Dendritic cell treated with granulocyte-macrophage colony-stimulating factor and Interleukin-4, amounts not matched to agents 40 ng/mL and 50 ng/mL, for 4 days (primary cell): ENCODE measurements at regions of chr17 and their contacts with region 1.

Region 1: DNA sequence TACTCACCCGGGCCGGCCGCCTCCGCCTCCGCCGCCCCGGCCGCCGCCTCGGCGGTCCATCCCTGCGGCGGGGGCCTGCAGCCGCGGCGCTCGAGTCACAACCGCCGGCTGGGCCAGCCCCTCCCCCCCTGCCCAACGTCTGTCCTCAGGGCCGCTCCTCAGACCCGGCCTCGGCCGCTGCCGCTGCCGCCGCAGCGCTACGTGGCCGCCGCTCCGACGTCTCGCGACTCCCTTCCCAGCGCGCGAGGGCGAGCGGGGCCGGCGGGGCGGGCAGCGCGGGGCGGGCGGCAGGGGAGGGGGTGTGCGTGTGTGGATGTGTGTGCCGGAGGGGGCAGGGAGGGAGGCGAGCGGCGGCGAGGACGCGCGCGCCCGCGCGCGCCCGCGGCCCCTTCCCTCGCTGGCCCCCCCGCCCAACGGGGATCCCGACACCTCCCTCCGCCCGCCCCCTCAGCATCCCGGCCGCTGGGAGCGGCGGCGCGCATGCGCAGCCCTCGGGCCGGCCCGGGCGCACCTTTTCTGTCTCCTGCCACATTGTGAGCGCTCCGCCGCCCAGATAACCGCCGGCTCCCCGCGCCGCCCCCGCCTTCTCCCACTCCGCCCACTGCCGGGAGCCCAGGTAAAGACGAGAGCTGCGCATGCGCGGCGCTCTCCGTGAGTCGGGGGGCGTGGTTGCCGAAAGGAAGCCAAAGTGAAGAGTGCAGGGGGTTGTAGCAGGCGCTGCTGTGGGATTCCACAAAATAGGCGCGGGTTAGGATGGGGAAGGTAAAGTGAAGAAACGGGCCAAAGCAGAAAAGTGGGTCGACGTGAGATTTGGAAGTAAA is at the start of gene ZNF652:
- H3K4me3 Mint-ChIP-seq: peak within 1 kb of the TSS; percentile 92
- H3K27ac Mint-ChIP-seq: peak within 1 kb of the TSS; percentile 90
- H3K4me1 Mint-ChIP-seq: peaks cover 54% of the 10 kb centered on the region
- H3K27me3 Mint-ChIP-seq: no peaks in the 10 kb centered on the region

Region 2: GRCh38 chr17:49343273-49343672 is 18.8 kb before region 1 on chr17:
- intact Hi-C with region 1: loop called (anchors 2 kb)
- H3K4me3 Mint-ChIP-seq: peak overlapping the region; percentile 32
- H3K27ac Mint-ChIP-seq: peak overlapping the region; percentile 28
- H3K4me1 Mint-ChIP-seq: peaks cover 48% of the 10 kb centered on the region
- H3K27me3 Mint-ChIP-seq: no peaks in the 10 kb centered on the region

Region 3: DNA sequence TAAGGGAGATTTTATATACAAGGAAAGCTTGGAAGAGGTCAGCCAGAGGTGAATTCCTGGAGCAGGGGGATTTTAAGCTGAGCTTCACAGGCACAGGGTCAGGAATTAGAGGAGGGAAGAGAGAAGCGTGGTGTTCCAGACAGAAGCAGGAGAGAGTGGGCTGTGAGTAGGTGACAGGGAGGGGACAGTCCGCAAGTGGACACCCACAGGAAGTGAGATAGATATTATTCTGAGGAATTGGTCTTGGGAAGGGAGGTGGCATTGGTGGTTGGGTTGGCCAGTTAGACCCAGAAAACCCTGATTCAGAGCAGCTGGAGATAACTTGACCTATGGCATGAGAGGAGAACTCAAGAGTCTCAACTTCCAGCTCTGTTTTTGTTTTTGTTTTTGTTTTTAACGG is 37.9 kb after region 1 on chr17:
- intact Hi-C with region 1: loop called (anchors 5 kb)
- H3K4me3 Mint-ChIP-seq: no peak overlapping the region
- H3K27ac Mint-ChIP-seq: peak overlapping the region; percentile 74
- H3K4me1 Mint-ChIP-seq: peaks cover 57% of the 10 kb centered on the region
- H3K27me3 Mint-ChIP-seq: no peaks in the 10 kb centered on the region

Region 4: DNA sequence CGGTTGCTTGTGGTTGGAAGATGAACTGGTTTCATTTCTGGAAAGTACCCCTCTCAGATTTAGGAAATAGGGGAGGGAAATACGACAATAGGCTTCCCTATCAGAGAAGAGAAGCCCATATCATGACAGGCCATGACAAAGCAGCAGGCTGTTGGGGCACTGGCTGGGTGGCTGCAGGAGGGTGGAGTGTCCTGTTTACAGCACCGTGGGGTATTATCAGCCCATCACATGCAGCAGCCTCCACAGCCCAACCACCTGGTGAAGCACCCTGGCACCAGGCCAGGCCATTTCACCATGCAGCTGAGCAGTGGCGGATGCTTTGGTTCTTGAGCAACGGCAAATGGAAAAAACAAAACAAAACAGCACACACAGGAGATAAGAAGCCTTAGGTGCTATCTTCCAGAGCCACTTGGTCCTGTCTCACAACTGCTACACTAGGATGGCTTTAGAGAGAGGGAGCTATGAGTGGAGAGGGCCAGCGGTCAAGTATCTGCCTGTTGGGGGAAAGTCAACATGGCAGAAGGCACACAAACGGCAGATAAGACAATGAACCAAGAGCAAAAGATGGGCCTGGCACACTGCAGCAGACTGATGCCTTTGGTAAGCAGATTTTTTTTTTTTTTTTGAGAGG is 377.6 kb after region 1 on chr17:
- intact Hi-C with region 1: no loop called
- H3K4me3 Mint-ChIP-seq: peak overlapping the region; percentile 65
- H3K27ac Mint-ChIP-seq: peak overlapping the region; percentile 84
- H3K4me1 Mint-ChIP-seq: peaks cover 86% of the 10 kb centered on the region
- H3K27me3 Mint-ChIP-seq: no peaks in the 10 kb centered on the region